ENCODE measurements at regions of chr17 and their contacts with region 1.

Region 1: GRCh38 chr17:29116804-29117772 is 63.1 kb downstream of the MYO18A start:
- DNase-seq: peak; percentile 58 to 75 (median 68)
- H3K4me3 ChIP-seq: no peak overlapping the region
- H3K27ac ChIP-seq: no peak overlapping the region
- H3K4me1 ChIP-seq: no peaks in the 10 kb centered on the region
- H3K27me3 ChIP-seq: no peaks in the 10 kb centered on the region

Region 2: GRCh38 chr17:29089601-29090044 is 27.5 kb before region 1 on chr17:
- CTCF ChIA-PET with region 1: interaction called, 17 read pairs
- POLR2A ChIA-PET with region 1: no interaction called
- DNase-seq: no peak
- H3K4me3 ChIP-seq: no peak overlapping the region
- H3K27ac ChIP-seq: peak overlapping the region; percentile 14 to 33
- H3K4me1 ChIP-seq: no peaks in the 10 kb centered on the region
- H3K27me3 ChIP-seq: no peaks in the 10 kb centered on the region

Region 3: GRCh38 chr17:29102741-29103181 is 14.3 kb before region 1 on chr17:
- CTCF ChIA-PET with region 1: interaction called, 22 read pairs
- POLR2A ChIA-PET with region 1: no interaction called
- DNase-seq: no peak
- H3K4me3 ChIP-seq: no peak overlapping the region
- H3K27ac ChIP-seq: peak overlapping the region in 1 of 2 experiments; percentile 15
- H3K4me1 ChIP-seq: peaks cover 0 to 6% (median 0%) of the 10 kb centered on the region in 4 experiments
- H3K27me3 ChIP-seq: no peaks in the 10 kb centered on the region

Region 4: DNA sequence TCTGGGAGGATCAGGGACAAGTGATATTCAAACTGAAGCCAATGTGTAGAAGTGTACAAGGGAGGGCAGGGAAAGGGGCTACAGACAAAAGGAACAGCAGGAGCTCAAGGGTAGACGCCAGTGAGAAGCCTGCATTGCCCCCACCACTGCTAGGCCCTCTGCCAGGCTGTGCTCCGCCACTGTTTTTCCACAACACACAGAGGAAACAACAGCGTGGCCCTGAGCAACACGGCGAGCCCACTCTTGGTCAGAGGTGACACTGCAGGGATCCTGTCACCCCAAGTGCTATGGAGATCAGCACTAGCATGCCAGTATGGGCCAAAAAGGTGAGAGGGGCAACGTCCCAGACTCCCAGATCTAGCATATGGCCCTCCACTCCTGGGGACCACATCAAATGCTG is 39.7 kb after region 1 on chr17:
- CTCF ChIA-PET with region 1: no interaction called
- POLR2A ChIA-PET with region 1: no interaction called
- DNase-seq: no peak
- H3K4me3 ChIP-seq: no peak overlapping the region
- H3K27ac ChIP-seq: no peak overlapping the region
- H3K4me1 ChIP-seq: peaks cover 4 to 41% (median 26%) of the 10 kb centered on the region in 4 experiments
- H3K27me3 ChIP-seq: no peaks in the 10 kb centered on the region